ENCODE measurements at regions of chr12 and their contacts with region 1.

Region 1: DNA sequence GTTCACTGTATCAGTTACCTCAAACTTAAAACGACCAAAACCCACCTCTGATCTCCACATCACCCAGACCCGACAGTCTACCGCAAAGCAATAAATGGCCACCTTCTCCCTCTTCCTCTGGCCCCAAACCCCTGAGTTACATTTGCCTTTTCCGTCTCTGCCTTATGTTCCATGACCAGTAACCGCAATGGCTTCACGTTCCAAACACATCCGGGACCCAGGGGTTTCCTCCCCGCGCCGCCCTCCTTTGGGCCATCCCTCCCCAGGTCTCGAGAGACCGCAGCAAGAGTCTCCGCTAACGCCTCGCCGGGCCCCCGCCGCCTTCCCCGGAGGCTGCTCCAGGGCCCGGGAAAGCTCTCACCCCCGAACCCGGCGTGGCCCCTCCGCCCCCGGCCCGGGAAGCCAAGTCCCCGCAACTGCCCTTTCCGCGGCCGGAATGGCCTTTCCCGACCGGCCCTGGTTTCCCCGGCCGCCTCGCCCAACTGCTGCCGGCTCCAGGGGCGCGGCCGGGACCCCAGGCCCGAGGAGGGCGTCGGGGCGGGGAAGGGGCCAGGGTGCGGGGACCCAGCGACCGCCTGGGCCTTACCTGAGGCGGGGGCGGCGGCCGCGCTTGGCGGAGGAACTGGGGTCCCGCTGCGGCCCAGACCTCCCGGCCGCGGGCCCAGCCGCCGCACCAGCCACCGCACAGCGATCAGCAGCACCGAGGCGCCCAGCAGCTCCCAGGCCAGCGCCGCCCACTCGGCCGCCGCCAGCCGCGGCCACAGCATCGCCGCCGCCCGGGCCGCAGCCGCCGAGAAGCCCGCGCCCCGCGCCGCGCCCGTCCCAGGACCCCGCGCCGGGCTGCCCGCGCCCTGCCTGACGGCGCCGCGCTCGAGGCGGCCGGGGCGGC is at the start of gene ANKLE2:
- DNase-seq: peak; percentile 60
- ATAC-seq: peak; percentile 42
- H3K4me3 ChIP-seq: peak within 1 kb of the TSS; percentile 77
- H3K27ac ChIP-seq: peak within 1 kb of the TSS; percentile 86
- H3K4me1 ChIP-seq: peaks cover 15% of the 10 kb centered on the region
- H3K27me3 ChIP-seq: no peaks in the 10 kb centered on the region
- CTCF ChIP-seq: no peak
- total RNA-seq, gene ANKLE2: 85.2 and 85.9 TPM in 2 replicates

Region 2: DNA sequence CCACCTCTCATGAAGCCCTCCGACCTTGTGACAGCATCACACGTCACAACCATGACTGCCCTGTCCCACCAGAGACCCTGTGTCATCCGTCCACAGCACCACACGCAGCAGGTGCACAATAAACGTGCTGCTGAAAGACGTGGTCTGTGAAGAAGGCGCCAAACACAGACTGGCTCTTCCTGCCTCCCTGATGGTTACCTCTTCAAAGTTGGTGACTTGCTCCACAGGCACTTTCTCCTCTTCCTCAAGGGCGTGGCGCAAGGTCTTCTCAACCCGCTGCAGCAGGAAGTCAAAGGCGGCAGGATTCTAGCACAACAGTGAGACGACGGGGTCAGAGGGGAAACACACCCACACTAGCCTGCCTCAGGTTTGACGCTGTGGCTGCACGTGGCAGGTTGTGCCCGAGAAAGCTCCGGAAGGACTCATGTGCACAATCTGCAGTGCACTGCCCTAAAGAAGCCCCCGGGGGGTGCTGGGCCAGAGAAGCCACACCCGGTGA is 89.2 kb before region 1 on chr12:
- CTCF ChIA-PET with region 1: no interaction called
- POLR2A ChIA-PET with region 1: no interaction called
- intact Hi-C with region 1: no loop called
- DNase-seq: no peak
- ATAC-seq: no peak
- H3K4me3 ChIP-seq: no peak overlapping the region
- H3K27ac ChIP-seq: no peak overlapping the region
- H3K4me1 ChIP-seq: no peaks in the 10 kb centered on the region
- H3K27me3 ChIP-seq: no peaks in the 10 kb centered on the region
- CTCF ChIP-seq: no peak

Region 3: DNA sequence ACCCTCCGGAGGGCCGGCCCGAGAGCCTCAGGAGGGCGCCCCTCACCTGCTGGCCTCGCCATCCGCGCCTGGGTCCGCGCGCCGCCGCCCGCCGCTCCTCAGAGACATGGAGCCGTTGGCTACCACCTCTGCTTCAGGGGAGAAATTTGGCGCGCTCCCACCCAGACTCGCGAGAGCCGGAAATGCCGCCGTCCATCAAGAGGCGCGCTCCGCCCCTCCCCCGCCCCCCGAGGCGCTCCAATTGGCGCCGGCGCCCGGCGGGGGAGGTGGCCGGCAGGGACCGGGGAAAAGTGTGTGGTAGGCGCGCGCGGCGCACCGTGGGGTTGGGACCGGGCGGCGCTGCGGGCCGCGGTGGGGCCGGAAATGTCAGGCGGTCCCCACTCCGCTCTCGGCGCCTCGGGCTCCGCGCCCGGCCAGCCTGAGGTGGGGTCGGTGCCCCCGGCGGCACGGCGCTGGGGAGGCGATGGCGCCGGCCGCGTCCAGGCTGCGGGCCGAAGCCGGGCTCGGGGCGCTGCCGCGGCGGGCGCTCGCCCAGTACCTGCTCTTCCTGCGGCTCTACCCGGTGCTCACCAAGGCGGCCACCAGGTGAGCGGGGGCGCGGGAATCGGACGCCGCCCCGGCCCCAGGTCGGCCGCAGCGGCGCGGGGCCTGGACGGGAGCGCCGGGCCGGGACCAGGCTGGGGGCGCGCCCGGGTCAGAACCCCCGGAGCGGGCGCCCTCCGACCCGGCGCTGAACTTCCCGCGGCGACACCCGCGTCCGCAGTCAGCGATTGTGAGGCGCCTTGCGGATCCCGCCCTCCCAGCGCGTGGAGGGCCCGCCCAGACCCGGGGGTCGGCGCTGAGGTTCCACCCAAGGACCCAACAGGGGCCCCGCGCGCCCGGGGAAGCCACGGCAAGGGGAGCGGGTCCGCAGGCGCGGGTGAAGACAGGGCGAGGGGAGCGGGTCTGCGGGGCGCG is 73.8 kb before region 1 on chr12 and contains the starts of genes POLE and PXMP2:
- CTCF ChIA-PET with region 1: no interaction called
- POLR2A ChIA-PET with region 1: no interaction called
- intact Hi-C with region 1: loop called (anchors 5 kb)
- DNase-seq: peak; percentile 99
- ATAC-seq: peak; percentile 94
- H3K4me3 ChIP-seq: peak within 1 kb of the TSS; percentile 81
- H3K27ac ChIP-seq: no peak within 1 kb of the TSS
- H3K4me1 ChIP-seq: peaks cover 16% of the 10 kb centered on the region
- H3K27me3 ChIP-seq: no peaks in the 10 kb centered on the region
- CTCF ChIP-seq: no peak
- total RNA-seq, gene POLE: 91.7 and 96.1 TPM in 2 replicates
- total RNA-seq, gene PXMP2: 38.6 and 42.7 TPM in 2 replicates

Region 4: GRCh38 chr12:132710422-132711168 is 50.7 kb before region 1 on chr12 and contains the start of gene PGAM5:
- CTCF ChIA-PET with region 1: no interaction called
- POLR2A ChIA-PET with region 1: no interaction called
- intact Hi-C with region 1: loop called (anchors 5 kb)
- DNase-seq: peak; percentile 95
- ATAC-seq: peak; percentile 86
- H3K4me3 ChIP-seq: peak within 1 kb of the TSS; percentile 94
- H3K27ac ChIP-seq: peak within 1 kb of the TSS; percentile 56
- H3K4me1 ChIP-seq: 0 out of 2 replicates have a peak, but pooled peaks cover 12% of the 10 kb centered on the region
- H3K27me3 ChIP-seq: no peaks in the 10 kb centered on the region
- CTCF ChIP-seq: no peak
- total RNA-seq, gene PGAM5: 135 and 158 TPM in 2 replicates